ENCODE measurements at regions of chr14 and their contacts with region 1.

Region 1: GRCh38 chr14:22099942-22100763 is 426.5 kb upstream of the OR4E1 start:
- DNase-seq: peak; percentile 36
- ATAC-seq: peak; percentile 80
- H3K4me3 ChIP-seq: no peak overlapping the region
- H3K27ac ChIP-seq: no peak overlapping the region
- H3K4me1 ChIP-seq: no peaks in the 10 kb centered on the region
- H3K27me3 ChIP-seq: peaks cover 8% of the 10 kb centered on the region
- CTCF ChIP-seq: peak; percentile 52
- POLR2A ChIP-seq: no peak
- RAD21 ChIP-seq: peak; percentile 19; the same call in 1 of the 2 replicates

Region 2: DNA sequence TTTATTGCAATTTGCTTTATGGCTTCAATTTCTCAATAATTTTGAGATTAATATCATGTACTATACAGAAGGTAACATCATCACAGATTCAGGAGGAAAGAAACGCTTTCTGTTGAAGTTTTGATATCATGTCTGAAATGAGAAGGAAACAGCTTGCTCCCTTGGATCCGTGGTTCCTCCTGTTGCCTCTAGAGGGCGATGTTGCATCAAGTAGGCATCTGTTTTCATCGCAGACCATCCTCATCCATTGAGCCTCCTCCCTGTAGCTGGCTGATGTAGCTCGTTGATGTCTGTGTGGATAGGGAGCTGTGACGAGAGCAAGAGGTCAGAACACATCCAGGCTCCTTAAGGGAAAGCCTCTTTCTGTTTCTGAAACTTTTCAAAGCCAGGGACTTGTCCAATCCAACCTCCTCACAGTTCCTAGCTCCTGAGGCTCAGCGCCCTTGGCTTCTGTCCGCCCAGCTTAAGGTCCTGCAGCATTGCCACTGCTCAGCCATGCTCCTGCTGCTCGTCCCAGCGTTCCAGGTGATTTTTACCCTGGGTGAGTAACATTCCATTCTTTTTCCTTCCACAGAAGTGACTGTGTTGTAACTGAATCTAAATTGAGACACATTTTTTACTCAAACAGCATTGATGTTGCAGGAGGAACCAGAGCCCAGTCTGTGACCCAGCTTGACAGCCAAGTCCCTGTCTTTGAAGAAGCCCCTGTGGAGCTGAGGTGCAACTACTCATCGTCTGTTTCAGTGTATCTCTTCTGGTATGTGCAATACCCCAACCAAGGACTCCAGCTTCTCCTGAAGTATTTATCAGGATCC is 121.8 kb before region 1 on chr14:
- CTCF ChIA-PET with region 1: no interaction called
- POLR2A ChIA-PET with region 1: no interaction called
- dilution Hi-C with region 1: no loop called
- in situ Hi-C with region 1: no loop called
- intact Hi-C with region 1: loop called (anchors 5 kb)
- DNase-seq: peak; percentile 15
- ATAC-seq: peak; percentile 46; the same call in 1 of the 2 replicates
- H3K4me3 ChIP-seq: no peak overlapping the region
- H3K27ac ChIP-seq: no peak overlapping the region
- H3K4me1 ChIP-seq: no peaks in the 10 kb centered on the region
- H3K27me3 ChIP-seq: no peaks in the 10 kb centered on the region
- CTCF ChIP-seq: peak; percentile 55
- POLR2A ChIP-seq: no peak
- RAD21 ChIP-seq: 0 out of 2 replicates have a peak, but pooled peaks have one; percentile 18